Tibial artery (tissue), 4 donors: ENCODE measurements at regions of chr2 and their contacts with region 1.

Region 1: GRCh38 chr2:115083225-115083624 is 640.8 kb downstream of the DPP10 start:
- DNase-seq: no peak
- H3K4me3 ChIP-seq: no peak overlapping the region
- H3K27ac ChIP-seq: no peak overlapping the region
- H3K4me1 ChIP-seq: no peaks in the 10 kb centered on the region
- H3K27me3 ChIP-seq: no peaks in the 10 kb centered on the region
- CTCF ChIP-seq: no peak

Region 2: GRCh38 chr2:114400890-114401289 is 682.3 kb before region 1 on chr2:
- intact Hi-C with region 1: no loop called
- DNase-seq: no peak
- H3K4me3 ChIP-seq: no peak overlapping the region
- H3K27ac ChIP-seq: no peak overlapping the region
- H3K4me1 ChIP-seq: peaks cover 0 to 15% (median 0%) of the 10 kb centered on the region in 4 donors
- H3K27me3 ChIP-seq: no peaks in the 10 kb centered on the region
- CTCF ChIP-seq: no peak

Region 3: DNA sequence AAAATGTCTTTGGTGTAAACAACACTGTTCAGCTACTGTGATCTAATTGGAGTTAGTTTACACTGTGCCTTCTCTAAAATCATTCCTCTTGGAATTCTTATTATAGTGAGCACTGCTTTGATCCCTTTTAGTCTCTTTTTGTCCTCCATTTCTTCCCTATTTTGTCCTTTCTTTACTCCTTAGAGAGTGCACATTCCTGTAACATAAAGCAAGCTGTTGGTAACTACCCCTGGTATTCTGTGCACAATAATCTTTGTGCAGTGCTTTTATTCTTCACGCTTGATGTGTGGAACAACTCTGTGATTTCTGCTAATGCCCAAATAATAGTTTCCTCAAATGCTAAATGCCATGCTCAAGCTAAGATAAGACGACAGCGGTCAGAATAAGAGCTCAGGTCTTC is 239.3 kb before region 1 on chr2:
- intact Hi-C with region 1: no loop called
- DNase-seq: no peak
- H3K4me3 ChIP-seq: no peak overlapping the region
- H3K27ac ChIP-seq: no peak overlapping the region
- H3K4me1 ChIP-seq: no peaks in the 10 kb centered on the region
- H3K27me3 ChIP-seq: no peaks in the 10 kb centered on the region
- CTCF ChIP-seq: no peak

Region 4: DNA sequence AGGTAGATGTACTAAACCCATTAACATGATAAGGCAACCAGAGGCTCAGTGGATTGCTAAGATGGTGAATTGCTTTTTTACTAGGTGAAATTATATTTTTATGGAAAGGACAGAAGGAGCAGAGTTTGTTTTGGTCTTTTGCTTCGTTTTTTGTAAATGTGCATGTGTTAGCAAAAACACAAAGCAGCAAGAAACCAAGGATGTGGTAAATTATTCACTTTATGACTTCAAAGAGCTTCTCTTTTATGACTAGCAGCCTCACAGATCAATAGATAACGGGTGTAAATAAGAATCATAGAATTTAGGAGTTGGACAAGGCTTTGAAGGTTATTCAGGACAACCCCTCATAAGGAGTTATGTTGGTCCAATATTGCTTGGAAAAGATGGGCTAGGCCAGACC is 25.8 kb before region 1 on chr2:
- intact Hi-C with region 1: no loop called
- DNase-seq: no peak
- H3K4me3 ChIP-seq: no peak overlapping the region
- H3K27ac ChIP-seq: no peak overlapping the region
- H3K4me1 ChIP-seq: no peaks in the 10 kb centered on the region
- H3K27me3 ChIP-seq: no peaks in the 10 kb centered on the region
- CTCF ChIP-seq: no peak

Region 5: DNA sequence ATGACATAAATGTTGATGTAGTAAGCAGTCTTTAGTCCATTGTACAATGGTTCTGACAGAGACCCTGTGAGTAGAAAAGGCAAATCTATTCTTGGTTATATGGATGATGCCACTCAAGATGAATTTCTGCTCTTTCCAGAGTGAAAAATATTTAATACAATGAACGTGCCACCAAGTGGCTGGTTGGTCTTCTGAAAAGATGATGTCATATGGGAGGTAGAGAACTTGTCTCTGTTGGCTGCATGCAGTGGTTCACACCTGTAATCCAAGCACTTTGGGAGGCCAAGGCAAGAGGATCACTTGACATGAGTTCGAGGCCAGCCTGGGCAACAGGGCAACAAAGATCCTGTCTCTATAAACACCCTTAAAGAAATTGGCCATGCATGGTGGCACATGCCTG is 16.7 kb after region 1 on chr2:
- intact Hi-C with region 1: loop called (anchors 1 kb)
- DNase-seq: no peak
- H3K4me3 ChIP-seq: no peak overlapping the region
- H3K27ac ChIP-seq: no peak overlapping the region
- H3K4me1 ChIP-seq: no peaks in the 10 kb centered on the region
- H3K27me3 ChIP-seq: no peaks in the 10 kb centered on the region
- CTCF ChIP-seq: no peak

Region 6: GRCh38 chr2:115199966-115200365 is 116.7 kb after region 1 on chr2:
- intact Hi-C with region 1: no loop called
- DNase-seq: no peak
- H3K4me3 ChIP-seq: no peak overlapping the region
- H3K27ac ChIP-seq: no peak overlapping the region
- H3K4me1 ChIP-seq: no peaks in the 10 kb centered on the region
- H3K27me3 ChIP-seq: no peaks in the 10 kb centered on the region
- CTCF ChIP-seq: no peak